Transverse colon (tissue), 4 donors: ENCODE measurements at regions of chr11 and their contacts with region 1.

Region 1: DNA sequence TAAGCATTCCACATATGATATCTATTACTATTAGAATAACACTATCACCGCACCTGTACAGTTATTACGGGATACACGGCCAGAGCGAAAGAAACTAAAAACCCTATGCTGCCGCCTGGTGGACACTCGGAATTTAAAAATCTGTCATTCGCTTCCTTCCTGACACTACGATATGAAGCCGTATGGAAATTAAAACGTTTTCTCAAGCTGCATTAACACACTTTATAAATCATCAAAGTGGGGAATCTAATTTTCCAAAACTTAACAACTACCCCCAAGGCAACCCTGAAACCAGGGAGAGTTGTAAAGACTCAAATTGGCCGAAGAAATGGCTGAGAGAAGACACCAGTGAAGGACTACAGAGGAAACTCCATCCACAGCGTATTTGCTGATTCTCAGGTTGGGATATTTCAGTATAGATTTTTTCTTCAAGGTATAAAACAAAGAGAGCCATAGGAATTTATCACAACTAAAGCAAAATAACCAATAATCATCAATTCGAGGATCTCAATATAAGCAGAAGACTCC is 1.4 kb downstream of the CCDC73 start:
- DNase-seq: peak; percentile 69
- H3K4me3 ChIP-seq: peak overlapping the region in 1 of 4 donors; percentile 8
- H3K27ac ChIP-seq: no peak overlapping the region
- H3K4me1 ChIP-seq: peaks cover 0 to 10% (median 0%) of the 10 kb centered on the region in 4 donors
- H3K27me3 ChIP-seq: peaks cover 16% of the 10 kb centered on the region
- CTCF ChIP-seq: peak; percentile 62 to 66 (median 66)
- EP300 ChIP-seq: no peak
- POLR2A ChIP-seq: no peak

Region 2: DNA sequence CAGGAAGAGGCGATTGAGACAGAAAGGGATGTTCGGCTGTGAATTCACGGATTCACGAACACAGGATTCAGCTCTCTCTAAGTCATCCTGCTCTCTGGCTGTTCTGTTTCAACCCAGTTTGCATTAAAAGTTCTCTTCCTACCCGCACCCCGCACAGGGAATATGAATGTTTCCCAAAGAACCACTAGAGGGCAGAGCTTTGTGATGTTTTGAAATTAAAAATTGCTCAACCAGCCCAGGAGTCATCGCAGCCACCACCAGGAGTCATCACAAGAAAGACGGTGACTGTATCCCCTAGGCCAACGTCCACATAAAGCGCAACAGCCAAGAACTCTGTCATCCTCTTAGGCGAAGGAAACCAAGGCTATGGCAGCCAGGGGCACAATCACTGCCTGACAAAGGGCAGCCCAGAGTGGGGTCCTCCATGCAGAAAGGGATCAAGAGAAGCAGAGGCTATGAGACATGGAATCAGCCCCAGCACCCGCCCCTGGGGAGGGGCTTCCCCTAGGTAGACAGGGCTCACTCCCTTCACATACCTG is 480.1 kb before region 1 on chr11:
- in situ Hi-C with region 1: loop called in 1 of 4 experiments (anchors 25 kb)
- intact Hi-C with region 1: loop called (anchors 10 kb)
- DNase-seq: peak; percentile 7
- H3K4me3 ChIP-seq: no peak overlapping the region
- H3K27ac ChIP-seq: no peak overlapping the region
- H3K4me1 ChIP-seq: no peaks in the 10 kb centered on the region
- H3K27me3 ChIP-seq: peaks cover 16% of the 10 kb centered on the region
- CTCF ChIP-seq: peak; percentile 31 to 53 (median 34)
- EP300 ChIP-seq: no peak
- POLR2A ChIP-seq: no peak

Region 3: DNA sequence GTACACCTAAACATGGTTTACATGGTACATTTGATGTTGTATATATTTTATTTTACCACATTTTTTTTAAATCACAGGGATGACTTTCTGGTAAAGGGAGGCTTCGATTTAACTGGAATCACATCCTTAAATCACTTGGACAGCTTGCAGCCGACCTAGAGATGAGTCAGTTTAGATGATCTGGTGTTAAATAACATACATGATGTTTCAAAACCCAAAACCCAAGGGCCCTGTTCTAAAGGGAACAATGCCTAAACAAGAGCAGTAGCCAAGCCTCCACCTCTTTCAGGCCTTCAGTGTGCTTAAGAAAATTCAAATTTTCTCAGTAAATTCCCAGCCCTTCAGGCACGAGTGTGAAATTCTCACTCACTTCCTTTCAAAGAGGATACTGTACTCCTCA is 466.5 kb before region 1 on chr11:
- in situ Hi-C with region 1: loop called (anchors 10 to 25 kb)
- intact Hi-C with region 1: no loop called
- DNase-seq: no peak
- H3K4me3 ChIP-seq: no peak overlapping the region
- H3K27ac ChIP-seq: no peak overlapping the region
- H3K4me1 ChIP-seq: no peaks in the 10 kb centered on the region
- H3K27me3 ChIP-seq: peaks cover 5% of the 10 kb centered on the region
- CTCF ChIP-seq: no peak
- EP300 ChIP-seq: no peak
- POLR2A ChIP-seq: no peak

Region 4: DNA sequence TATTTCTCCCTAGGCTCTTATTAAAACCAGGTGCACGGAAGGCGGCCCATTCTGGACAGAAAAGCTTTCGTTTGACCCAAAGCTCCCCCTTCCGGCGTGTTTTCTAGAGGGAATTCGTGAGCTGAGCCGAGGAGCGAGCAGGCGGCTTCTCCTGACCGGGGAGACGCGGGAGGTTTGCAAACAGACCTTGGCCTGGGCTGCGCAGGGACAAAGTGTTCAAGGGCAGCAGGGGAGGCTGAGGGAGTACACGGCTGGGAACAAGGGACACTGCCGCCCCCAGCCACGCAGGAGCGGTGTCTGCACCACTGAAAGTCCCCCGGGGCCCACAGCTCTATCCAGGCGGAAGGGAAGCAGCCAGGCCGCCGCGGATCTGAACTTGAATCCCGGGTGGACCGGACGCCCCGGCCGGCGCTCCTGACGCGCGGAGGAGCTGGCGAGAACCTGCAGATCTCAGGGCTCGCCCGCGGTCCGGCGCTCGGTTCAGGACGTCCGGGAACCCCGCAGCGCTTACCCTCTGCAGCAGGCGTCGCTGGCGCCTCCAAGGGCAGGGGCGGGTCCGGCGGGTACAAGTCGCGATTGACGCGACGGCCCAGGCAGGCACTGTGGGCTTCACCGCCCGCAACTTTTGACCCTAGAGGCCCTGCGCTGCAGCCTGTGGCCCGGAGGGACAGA is 459.6 kb before region 1 on chr11:
- in situ Hi-C with region 1: loop called in 3 of 4 experiments (anchors 10 to 25 kb)
- intact Hi-C with region 1: no loop called
- DNase-seq: peak; percentile 55
- H3K4me3 ChIP-seq: peak overlapping the region in 3 of 4 donors; percentile 25 to 58 (median 46)
- H3K27ac ChIP-seq: no peak overlapping the region
- H3K4me1 ChIP-seq: peaks cover 0 to 15% (median 11%) of the 10 kb centered on the region in 4 donors
- H3K27me3 ChIP-seq: peaks cover 26% of the 10 kb centered on the region
- CTCF ChIP-seq: peak in 3 of 5 experiments; percentile 15 to 25 (median 15)
- EP300 ChIP-seq: no peak
- POLR2A ChIP-seq: no peak

Region 5: DNA sequence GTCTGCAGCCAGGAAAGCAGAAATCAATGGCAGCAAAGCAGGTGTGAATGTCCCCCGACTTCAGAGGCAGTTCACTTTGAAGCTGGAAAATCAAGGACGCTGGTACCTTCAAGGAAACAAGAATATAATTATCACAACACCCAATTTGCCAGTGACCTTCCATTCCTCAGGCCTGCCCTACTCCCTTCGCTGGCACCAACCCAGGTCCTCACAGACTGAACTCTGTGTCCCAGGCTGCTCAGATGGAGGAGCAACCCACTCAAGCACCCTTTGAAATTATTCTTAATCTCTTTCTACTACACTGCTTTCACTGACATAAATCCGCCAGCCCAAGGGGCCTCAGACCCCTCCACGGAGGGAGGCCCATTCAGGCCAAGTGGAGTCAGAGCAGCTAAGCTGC is 293.0 kb before region 1 on chr11:
- in situ Hi-C with region 1: no loop called
- intact Hi-C with region 1: no loop called
- DNase-seq: no peak
- H3K4me3 ChIP-seq: no peak overlapping the region
- H3K27ac ChIP-seq: no peak overlapping the region
- H3K4me1 ChIP-seq: no peaks in the 10 kb centered on the region
- H3K27me3 ChIP-seq: no peaks in the 10 kb centered on the region
- CTCF ChIP-seq: no peak
- EP300 ChIP-seq: no peak
- POLR2A ChIP-seq: no peak